Psoas muscle (tissue), 8 donors: ENCODE measurements at regions of chr9 and their contacts with region 1.

Region 1: DNA sequence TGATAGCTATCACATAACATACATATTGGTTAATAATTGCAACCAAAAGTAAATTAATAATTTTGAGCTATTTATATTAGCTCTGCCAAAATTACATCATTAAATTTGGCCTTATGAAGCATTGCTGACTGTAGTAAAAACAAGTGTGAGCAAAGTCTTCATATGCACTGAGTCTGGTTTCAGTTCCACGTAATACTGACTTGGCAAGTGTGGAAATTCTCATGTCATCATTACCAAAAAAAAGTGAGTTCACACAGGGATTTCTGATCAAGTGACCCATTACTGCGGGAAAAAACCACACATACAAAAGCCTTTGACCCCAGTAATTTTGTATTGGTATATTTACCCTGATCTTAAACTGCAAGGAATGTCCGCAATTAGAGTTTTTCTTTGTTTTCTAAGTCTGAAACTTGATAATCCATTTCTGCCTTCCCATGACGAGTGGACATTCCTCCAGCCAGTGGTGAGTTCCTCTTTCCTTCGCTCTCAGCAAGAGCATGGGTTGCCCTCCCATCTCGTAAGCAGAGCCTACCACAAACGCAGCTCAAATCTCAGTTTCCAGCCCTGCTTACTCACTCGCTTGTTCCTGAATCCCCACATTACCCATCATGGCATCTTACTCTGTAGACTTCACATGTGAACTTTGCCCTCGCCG is 220.2 kb upstream of the DMRT1 start:
- DNase-seq: no peak
- ATAC-seq: peak in 3 of 4 donors; percentile 65 to 69 (median 65)
- H3K4me3 ChIP-seq: no peak overlapping the region
- H3K27ac ChIP-seq: peak overlapping the region; percentile 40
- H3K4me1 ChIP-seq: peaks cover 13% of the 10 kb centered on the region
- H3K27me3 ChIP-seq: no peaks in the 10 kb centered on the region
- CTCF ChIP-seq: no peak

Region 2: GRCh38 chr9:306887-307286 is 314.4 kb before region 1 on chr9:
- intact Hi-C with region 1: no loop called
- DNase-seq: no peak
- ATAC-seq: no peak
- H3K4me3 ChIP-seq: no peak overlapping the region
- H3K27ac ChIP-seq: no peak overlapping the region
- H3K4me1 ChIP-seq: no peaks in the 10 kb centered on the region
- H3K27me3 ChIP-seq: no peaks in the 10 kb centered on the region
- CTCF ChIP-seq: no peak

Region 3: GRCh38 chr9:684941-685340 is 63.6 kb after region 1 on chr9:
- intact Hi-C with region 1: loop called in 1 of 2 experiments (anchors 5 kb)
- DNase-seq: no peak
- ATAC-seq: no peak
- H3K4me3 ChIP-seq: no peak overlapping the region
- H3K27ac ChIP-seq: peak overlapping the region; percentile 77
- H3K4me1 ChIP-seq: peaks cover 37% of the 10 kb centered on the region
- H3K27me3 ChIP-seq: no peaks in the 10 kb centered on the region
- CTCF ChIP-seq: no peak